B cell (primary cell): ENCODE measurements at regions of chr22 and their contacts with region 1.

Region 1: DNA sequence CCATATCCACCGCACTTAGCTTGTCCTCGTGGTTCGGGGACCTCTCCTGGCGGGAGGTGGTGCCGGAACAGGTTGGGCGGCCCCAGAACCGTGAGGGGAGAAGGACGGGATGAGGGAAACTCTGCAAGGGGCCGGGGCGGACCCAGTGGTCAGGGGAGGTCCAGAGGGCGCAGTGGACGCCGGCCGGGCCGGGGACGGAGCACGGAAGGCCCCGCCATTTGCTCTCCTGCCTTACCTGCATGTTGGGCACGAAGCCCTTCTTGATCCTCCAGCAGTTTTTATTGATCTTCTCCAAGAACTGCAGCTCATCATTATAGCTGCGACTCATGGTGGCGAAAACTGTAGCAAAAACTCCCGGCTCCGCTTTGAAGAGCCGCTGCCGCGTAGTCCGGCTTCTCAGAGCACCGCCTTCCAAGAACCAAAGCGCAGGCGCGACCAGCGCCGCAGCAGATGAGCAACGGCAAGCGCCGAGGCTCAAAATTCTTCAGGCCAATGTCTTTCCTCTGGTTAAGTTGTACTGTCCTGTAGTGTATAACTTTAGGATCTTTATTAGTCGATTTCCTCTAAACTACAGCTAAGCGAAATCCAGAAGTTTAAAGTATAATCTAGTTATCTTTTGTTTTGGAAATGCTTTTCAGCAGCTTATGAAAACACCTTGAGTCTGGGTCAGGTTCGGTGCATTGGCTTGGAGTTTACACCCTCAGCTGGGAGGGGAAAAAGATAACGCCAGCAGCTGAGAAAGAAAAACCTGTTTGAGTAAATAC is at the start of gene RTCB:
- DNase-seq: peak; percentile 94
- ATAC-seq: peak; percentile 76
- H3K4me3 ChIP-seq: peak within 1 kb of the TSS; percentile 94 to 99 (median 99)
- H3K4me3 Mint-ChIP-seq: peak within 1 kb of the TSS; percentile 97
- H3K27ac ChIP-seq: peak within 1 kb of the TSS; percentile 77 to 91
- H3K27ac Mint-ChIP-seq: peak within 1 kb of the TSS; percentile 97
- H3K4me1 ChIP-seq: peaks cover 37 to 39% of the 10 kb centered on the region in 2 donors
- H3K4me1 Mint-ChIP-seq: peaks cover 56% of the 10 kb centered on the region
- H3K27me3 ChIP-seq: peaks cover 0 to 7% (median 2%) of the 10 kb centered on the region in 4 experiments
- H3K27me3 Mint-ChIP-seq: peaks cover 8% of the 10 kb centered on the region
- CTCF ChIP-seq: no peak
- total RNA-seq, gene RTCB: 60.1 and 60.6 TPM in 2 replicates

Region 2: DNA sequence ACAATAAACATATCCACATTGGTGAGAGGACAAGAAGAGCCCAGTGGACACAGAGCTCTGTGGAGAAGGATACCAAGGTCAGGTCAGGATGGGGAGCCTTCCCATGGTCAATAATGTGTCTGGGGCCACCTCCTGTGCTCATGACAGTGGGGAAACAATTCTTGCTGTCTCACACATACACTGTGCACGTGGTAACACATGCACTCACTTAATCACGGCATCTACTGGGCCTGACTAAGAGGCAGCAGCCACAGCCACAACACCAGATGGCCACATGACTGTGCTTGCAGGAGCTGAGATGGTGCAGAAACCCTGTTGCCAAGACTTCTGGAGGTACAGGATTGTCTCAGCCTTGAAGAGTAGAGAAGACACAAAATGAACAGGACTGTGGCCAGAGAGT is 281.5 kb before region 1 on chr22:
- CTCF ChIA-PET with region 1: no interaction called
- POLR2A ChIA-PET with region 1: no interaction called
- intact Hi-C with region 1: loop called (anchors 10 kb)
- DNase-seq: no peak
- ATAC-seq: no peak
- H3K4me3 ChIP-seq: no peak overlapping the region
- H3K4me3 Mint-ChIP-seq: no peak overlapping the region
- H3K27ac ChIP-seq: no peak overlapping the region
- H3K27ac Mint-ChIP-seq: peak overlapping the region; percentile 10
- H3K4me1 ChIP-seq: no peaks in the 10 kb centered on the region
- H3K4me1 Mint-ChIP-seq: no peaks in the 10 kb centered on the region
- H3K27me3 ChIP-seq: peaks cover 0 to 2% (median 0%) of the 10 kb centered on the region in 4 experiments
- H3K27me3 Mint-ChIP-seq: peaks cover 11% of the 10 kb centered on the region
- CTCF ChIP-seq: no peak

Region 3: DNA sequence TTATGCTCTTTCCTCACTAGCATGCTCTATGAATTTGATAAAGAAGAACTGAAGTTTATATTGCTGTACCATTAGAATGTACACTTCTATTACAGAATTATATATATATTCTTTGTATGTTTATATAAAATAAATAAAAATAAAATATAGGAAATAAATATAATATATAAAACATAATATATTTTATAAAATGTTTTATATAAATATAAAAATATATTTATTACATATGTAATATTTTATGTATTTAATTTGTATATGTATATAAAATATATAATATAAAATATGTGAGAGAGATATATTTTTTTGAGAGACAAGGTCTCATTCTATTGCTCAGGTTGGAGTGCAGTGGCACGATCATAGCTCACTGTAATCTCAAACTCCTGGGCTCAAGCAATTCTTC is 18.3 kb after region 1 on chr22:
- CTCF ChIA-PET with region 1: no interaction called
- POLR2A ChIA-PET with region 1: no interaction called
- intact Hi-C with region 1: loop called (anchors 2 kb)
- DNase-seq: no peak
- ATAC-seq: no peak
- H3K4me3 ChIP-seq: no peak overlapping the region
- H3K4me3 Mint-ChIP-seq: no peak overlapping the region
- H3K27ac ChIP-seq: no peak overlapping the region
- H3K27ac Mint-ChIP-seq: no peak overlapping the region
- H3K4me1 ChIP-seq: no peaks in the 10 kb centered on the region
- H3K4me1 Mint-ChIP-seq: no peaks in the 10 kb centered on the region
- H3K27me3 ChIP-seq: peaks cover 0 to 4% (median 2%) of the 10 kb centered on the region in 4 experiments
- H3K27me3 Mint-ChIP-seq: peaks cover 46% of the 10 kb centered on the region
- CTCF ChIP-seq: no peak

Region 4: GRCh38 chr22:32628628-32629572 is 216.9 kb after region 1 on chr22:
- CTCF ChIA-PET with region 1: no interaction called
- POLR2A ChIA-PET with region 1: no interaction called
- intact Hi-C with region 1: no loop called
- DNase-seq: no peak
- ATAC-seq: no peak
- H3K4me3 ChIP-seq: no peak overlapping the region
- H3K4me3 Mint-ChIP-seq: no peak overlapping the region
- H3K27ac ChIP-seq: no peak overlapping the region
- H3K27ac Mint-ChIP-seq: no peak overlapping the region
- H3K4me1 ChIP-seq: no peaks in the 10 kb centered on the region
- H3K4me1 Mint-ChIP-seq: no peaks in the 10 kb centered on the region
- H3K27me3 ChIP-seq: peaks cover 0 to 4% (median 2%) of the 10 kb centered on the region in 4 experiments
- H3K27me3 Mint-ChIP-seq: peaks cover 16% of the 10 kb centered on the region
- CTCF ChIP-seq: no peak